Caco-2 (cell line): ENCODE measurements at regions of chr9 and their contacts with region 1.

Region 1: GRCh38 chr9:97921959-97922724 is at the start of gene TRMO:
- DNase-seq: peak; percentile 97
- H3K4me3 ChIP-seq: peak within 1 kb of the TSS; percentile 49
- H3K4me3 Mint-ChIP-seq: peak within 1 kb of the TSS; percentile 85
- H3K27ac Mint-ChIP-seq: peak within 1 kb of the TSS; percentile 96
- H3K4me1 ChIP-seq: no peaks in the 10 kb centered on the region; the same call in 1 of the 2 replicates
- H3K4me1 Mint-ChIP-seq: peaks cover 17% of the 10 kb centered on the region
- H3K27me3 ChIP-seq: no peaks in the 10 kb centered on the region
- H3K27me3 Mint-ChIP-seq: peaks cover 2% of the 10 kb centered on the region
- CTCF ChIP-seq: peak; percentile 67 to 84
- total RNA-seq, gene TRMO: 10.0 and 15.2 TPM in 2 replicates

Region 2: GRCh38 chr9:97788763-97789663 is 133.1 kb before region 1 on chr9:
- CTCF ChIA-PET with region 1: no interaction called
- POLR2A ChIA-PET with region 1: interaction called, 10 read pairs
- intact Hi-C with region 1: no loop called
- DNase-seq: peak; percentile 56 to 61
- H3K4me3 ChIP-seq: no peak overlapping the region
- H3K4me3 Mint-ChIP-seq: no peak overlapping the region
- H3K27ac Mint-ChIP-seq: peak overlapping the region; percentile 31
- H3K4me1 ChIP-seq: peaks cover 49% of the 10 kb centered on the region
- H3K4me1 Mint-ChIP-seq: peaks cover 12% of the 10 kb centered on the region
- H3K27me3 ChIP-seq: no peaks in the 10 kb centered on the region
- H3K27me3 Mint-ChIP-seq: no peaks in the 10 kb centered on the region
- CTCF ChIP-seq: no peak

Region 3: DNA sequence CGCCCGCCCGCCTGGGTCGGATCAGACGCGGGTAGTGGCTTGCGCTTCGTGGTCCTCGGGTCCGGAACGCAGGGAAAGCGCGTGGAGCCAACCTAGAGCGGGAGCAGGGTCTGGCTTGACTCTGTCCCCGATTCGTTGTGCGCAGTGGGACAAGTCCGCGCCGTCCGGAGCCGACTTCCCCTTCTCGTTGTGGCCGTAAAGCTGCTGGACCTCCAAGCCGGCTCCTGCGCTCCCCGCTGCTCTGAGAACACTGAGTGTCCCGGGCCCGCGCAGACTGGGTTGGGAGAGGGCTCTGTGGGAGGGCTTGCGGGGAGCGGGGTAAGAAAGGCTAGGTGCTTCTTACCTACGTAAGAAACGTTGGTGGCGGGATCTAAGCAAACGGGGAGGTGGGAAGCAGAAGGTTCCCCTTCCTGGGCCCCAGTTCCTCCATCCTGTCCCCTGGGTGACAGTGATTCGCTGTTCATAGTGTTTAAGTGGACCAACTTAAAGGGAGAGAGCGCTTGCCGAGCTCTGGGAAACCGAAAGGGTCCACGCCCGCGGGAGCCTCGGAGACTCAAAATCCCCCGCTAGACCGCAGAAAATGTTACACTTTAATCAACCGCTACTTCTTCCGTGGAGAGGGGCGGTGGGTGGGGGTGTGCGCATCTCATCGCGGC is 73.4 kb before region 1 on chr9:
- CTCF ChIA-PET with region 1: no interaction called
- POLR2A ChIA-PET with region 1: no interaction called
- intact Hi-C with region 1: no loop called
- DNase-seq: no peak
- H3K4me3 ChIP-seq: no peak overlapping the region
- H3K4me3 Mint-ChIP-seq: no peak overlapping the region
- H3K27ac Mint-ChIP-seq: no peak overlapping the region
- H3K4me1 ChIP-seq: no peaks in the 10 kb centered on the region
- H3K4me1 Mint-ChIP-seq: no peaks in the 10 kb centered on the region
- H3K27me3 ChIP-seq: no peaks in the 10 kb centered on the region
- H3K27me3 Mint-ChIP-seq: no peaks in the 10 kb centered on the region
- CTCF ChIP-seq: no peak

Region 4: DNA sequence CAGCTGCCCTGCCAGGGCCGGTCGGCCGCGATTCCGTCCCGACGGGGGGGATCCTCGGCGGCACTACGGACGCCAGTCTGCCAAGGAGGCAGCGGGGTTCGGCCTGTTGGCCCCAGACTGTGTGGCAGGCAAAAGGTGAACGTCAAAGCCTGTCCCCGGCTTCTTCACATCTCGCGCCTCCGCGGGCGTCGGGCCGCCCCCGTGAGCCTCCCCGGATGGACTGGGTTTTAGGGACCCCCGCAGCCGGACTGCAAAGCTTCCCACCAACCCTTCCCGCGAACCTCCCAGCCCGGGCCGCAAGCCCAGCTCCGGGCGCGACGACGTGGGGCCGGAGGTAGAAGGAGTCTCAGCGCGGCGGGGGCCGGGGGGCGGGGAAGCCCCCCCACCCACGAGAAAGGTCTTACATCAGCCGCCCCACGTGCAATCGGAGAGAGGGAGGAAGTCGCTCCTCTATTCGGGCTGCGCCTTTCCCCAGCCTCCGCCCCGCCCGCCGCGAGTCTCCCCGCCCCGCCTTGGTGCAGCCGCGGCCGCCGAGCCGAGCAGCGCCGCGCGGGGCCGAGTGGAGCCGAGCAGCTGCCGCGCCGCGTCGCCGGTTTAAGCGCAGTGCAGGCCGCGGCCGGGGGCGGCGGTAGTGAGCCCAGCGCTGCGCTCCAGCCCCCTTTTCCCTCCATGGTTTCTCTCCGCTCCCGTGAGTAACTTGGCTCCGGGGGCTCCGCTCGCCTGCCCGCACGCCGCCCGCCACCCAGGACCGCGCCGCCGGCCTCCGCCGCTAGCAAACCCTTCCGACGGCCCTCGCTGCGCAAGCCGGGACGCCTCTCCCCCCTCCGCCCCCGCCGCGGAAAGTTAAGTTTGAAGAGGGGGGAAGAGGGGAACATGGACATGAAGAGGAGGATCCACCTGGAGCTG is 60.8 kb after region 1 on chr9 and contains the start of gene ANP32B:
- CTCF ChIA-PET with region 1: interaction called, 18 read pairs
- POLR2A ChIA-PET with region 1: interaction called, 11 read pairs
- intact Hi-C with region 1: loop called (anchors 1 kb)
- DNase-seq: peak; percentile 95 to 96
- H3K4me3 ChIP-seq: peak within 1 kb of the TSS; percentile 96
- H3K4me3 Mint-ChIP-seq: peak within 1 kb of the TSS; percentile 79
- H3K27ac Mint-ChIP-seq: peak within 1 kb of the TSS; percentile 84
- H3K4me1 ChIP-seq: peaks cover 10% of the 10 kb centered on the region
- H3K4me1 Mint-ChIP-seq: peaks cover 28% of the 10 kb centered on the region
- H3K27me3 ChIP-seq: no peaks in the 10 kb centered on the region
- H3K27me3 Mint-ChIP-seq: no peaks in the 10 kb centered on the region
- CTCF ChIP-seq: peak; percentile 64 to 96
- total RNA-seq, gene ANP32B: 299 and 317 TPM in 2 replicates

Region 5: DNA sequence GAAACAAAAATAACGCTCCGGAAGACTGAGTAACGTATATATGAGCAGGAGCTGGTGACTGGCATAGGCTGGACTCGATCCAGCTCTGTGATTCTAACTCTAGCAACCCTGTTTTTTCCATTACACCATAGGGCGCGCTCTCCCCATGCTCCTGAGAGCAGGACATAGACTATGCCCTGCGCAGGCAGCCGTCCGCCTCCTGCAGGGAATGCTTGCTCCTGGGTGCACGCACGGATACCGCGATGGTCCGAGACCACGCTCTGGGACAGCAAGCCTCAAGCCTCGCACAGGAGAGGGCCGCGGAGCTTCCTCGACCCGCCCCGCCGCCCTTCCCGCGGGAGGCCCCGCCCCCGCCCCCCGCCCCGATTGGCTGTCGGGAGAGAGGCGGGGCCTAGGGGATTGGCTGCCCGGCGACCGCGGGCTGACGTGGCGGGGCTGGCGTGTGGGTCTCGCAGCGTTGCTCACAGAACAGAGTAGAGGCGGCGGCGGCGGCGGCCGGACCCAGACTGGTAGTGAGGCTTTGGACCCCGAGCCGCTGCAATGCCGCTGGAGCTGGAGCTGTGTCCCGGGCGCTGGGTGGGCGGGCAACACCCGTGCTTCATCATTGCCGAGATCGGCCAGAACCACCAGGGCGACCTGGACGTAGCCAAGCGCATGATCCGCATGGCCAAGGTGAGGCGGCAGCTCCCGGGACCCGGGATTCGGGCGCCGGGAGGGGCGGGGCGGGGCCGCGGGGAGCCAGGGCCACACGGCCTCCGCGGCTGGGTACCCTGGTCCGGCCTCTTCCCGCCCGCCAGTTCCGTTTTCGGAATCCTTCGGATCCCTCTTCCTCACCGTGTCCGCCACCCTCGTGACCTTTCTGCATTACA is 134.4 kb after region 1 on chr9 and contains the start of gene NANS:
- CTCF ChIA-PET with region 1: interaction called, 10 read pairs
- POLR2A ChIA-PET with region 1: interaction called, 15 read pairs
- intact Hi-C with region 1: no loop called
- DNase-seq: peak; percentile 95 to 97
- H3K4me3 ChIP-seq: peak within 1 kb of the TSS; percentile 79
- H3K4me3 Mint-ChIP-seq: peak within 1 kb of the TSS; percentile 93
- H3K27ac Mint-ChIP-seq: peak within 1 kb of the TSS; percentile 92
- H3K4me1 ChIP-seq: peaks cover 7% of the 10 kb centered on the region
- H3K4me1 Mint-ChIP-seq: no peaks in the 10 kb centered on the region
- H3K27me3 ChIP-seq: no peaks in the 10 kb centered on the region
- H3K27me3 Mint-ChIP-seq: no peaks in the 10 kb centered on the region
- CTCF ChIP-seq: peak in 1 of 2 experiments; percentile 18
- total RNA-seq, gene NANS: 68.7 and 71.7 TPM in 2 replicates

Region 6: DNA sequence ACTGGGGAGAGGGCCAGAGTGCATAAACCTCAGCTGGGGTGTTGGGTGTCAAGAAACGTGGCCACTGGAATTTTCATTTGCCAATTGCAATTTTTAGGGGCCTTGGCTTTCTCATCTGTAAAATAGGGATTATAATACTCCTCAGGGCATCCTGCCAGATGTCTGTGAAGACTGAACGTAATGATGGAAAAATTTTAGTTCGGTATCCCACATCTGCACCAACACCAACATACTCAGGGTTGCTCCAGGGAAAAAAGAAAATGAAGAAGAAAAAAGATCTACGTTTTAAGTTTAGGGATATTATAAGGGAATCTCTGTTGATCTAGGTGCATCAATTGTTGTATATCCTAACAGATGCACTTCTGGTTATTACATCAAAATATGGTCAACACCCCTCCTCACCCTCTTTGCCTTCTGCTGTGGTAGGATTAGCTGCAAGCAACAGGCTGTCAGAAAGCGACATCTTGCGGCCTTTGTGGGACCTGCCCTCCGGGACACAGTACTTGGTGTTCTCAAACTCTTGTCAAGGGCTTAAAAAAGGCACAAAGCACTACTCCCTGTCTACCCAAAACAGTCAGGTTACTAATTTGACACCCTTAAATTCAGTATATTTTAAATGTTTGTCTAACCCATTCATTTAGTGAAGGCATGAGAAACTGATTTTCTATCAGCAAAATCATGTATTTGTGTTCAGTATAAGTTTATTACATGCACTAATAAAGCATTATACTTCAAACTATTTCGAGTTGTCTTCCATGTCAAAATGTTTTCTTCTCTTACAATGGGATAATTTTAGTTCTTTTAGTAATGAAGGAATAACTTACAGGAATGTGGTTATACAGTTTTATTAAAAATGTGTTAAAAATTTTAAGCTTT is 341.6 kb after region 1 on chr9:
- CTCF ChIA-PET with region 1: no interaction called
- POLR2A ChIA-PET with region 1: no interaction called
- intact Hi-C with region 1: loop called (anchors 5 kb)
- DNase-seq: peak; percentile 85
- H3K4me3 ChIP-seq: no peak overlapping the region
- H3K4me3 Mint-ChIP-seq: no peak overlapping the region
- H3K27ac Mint-ChIP-seq: no peak overlapping the region
- H3K4me1 ChIP-seq: no peaks in the 10 kb centered on the region
- H3K4me1 Mint-ChIP-seq: peaks cover 17% of the 10 kb centered on the region
- H3K27me3 ChIP-seq: no peaks in the 10 kb centered on the region
- H3K27me3 Mint-ChIP-seq: no peaks in the 10 kb centered on the region
- CTCF ChIP-seq: peak; percentile 94 to 96